ENCODE measurements at regions of chr7 and their contacts with region 1.

Region 1: DNA sequence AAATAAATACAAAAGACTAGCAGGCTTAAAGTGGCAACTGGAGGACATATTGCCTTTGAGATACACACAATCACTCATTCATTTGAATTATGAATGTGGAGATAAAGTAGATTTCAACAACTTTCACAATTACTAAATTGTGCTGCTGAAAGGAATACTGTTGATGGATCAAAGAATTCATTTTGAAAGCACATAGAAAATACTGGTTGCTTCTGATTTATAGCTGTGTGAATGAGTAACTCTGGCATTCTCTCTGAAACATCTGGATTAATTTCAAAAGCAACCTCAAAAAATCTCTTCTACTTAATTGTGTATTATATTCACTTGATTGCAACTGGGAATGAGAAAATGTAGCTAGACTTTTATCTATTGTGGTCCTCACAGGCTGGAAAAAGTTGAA is 397.6 kb downstream of the THSD7A start:
- DNase-seq: no peak
- H3K4me3 ChIP-seq: no peak overlapping the region
- H3K27ac ChIP-seq: no peak overlapping the region
- H3K4me1 ChIP-seq: no peaks in the 10 kb centered on the region
- H3K27me3 ChIP-seq: no peaks in the 10 kb centered on the region
- CTCF ChIP-seq: no peak
- POLR2A ChIP-seq: no peak

Region 2: DNA sequence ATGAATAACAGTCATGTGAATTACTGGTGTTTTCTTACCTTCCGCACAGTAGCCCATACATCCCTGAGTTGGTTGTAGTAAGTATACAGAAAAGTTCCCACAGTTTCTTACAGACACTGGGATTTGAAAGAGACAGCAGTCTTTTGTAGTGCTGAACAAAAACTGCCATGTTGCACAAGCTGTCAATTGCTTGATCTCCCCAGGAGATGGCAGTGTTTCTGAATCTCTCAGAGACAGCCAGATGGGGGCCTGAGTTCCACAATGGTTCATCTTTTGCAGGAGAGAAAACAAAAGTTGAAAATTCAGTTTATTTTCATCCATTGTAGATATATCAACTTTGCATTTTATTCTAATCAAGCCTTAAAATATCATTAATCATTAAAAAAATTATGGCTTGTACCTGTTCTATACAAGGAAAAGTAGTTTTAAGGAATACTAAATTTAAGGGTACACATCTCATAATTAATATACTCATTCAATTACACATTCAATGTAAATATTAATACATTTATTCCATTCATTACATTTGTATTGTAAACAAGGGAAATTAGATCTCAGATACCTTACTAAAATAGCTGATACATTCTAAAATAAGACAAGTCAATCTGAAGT is 954.8 kb after region 1 on chr7:
- CTCF ChIA-PET with region 1: no interaction called
- POLR2A ChIA-PET with region 1: no interaction called
- dilution Hi-C with region 1: no loop called
- intact Hi-C with region 1: loop called (anchors 5 kb)
- DNase-seq: peak; percentile 59
- H3K4me3 ChIP-seq: no peak overlapping the region
- H3K27ac ChIP-seq: no peak overlapping the region
- H3K4me1 ChIP-seq: no peaks in the 10 kb centered on the region
- H3K27me3 ChIP-seq: no peaks in the 10 kb centered on the region
- CTCF ChIP-seq: peak; percentile 79
- POLR2A ChIP-seq: no peak